ENCODE measurements at regions of chr17 and their contacts with region 1.

Region 1: GRCh38 chr17:11880714-11881113 is 116.6 kb downstream of the ZNF18 start:
- DNase-seq: peak; percentile 5
- H3K4me3 Mint-ChIP-seq: no peak overlapping the region
- H3K27ac Mint-ChIP-seq: no peak overlapping the region
- H3K4me1 Mint-ChIP-seq: no peaks in the 10 kb centered on the region
- H3K27me3 Mint-ChIP-seq: no peaks in the 10 kb centered on the region
- CTCF ChIP-seq: peak; percentile 59

Region 2: GRCh38 chr17:11144358-11145233 is 736.1 kb before region 1 on chr17:
- CTCF ChIA-PET with region 1: interaction called, 10 read pairs
- POLR2A ChIA-PET with region 1: no interaction called
- intact Hi-C with region 1: no loop called
- DNase-seq: peak; percentile 46
- H3K4me3 Mint-ChIP-seq: no peak overlapping the region
- H3K27ac Mint-ChIP-seq: no peak overlapping the region
- H3K4me1 Mint-ChIP-seq: peaks cover 14% of the 10 kb centered on the region
- H3K27me3 Mint-ChIP-seq: no peaks in the 10 kb centered on the region
- CTCF ChIP-seq: peak; percentile 74

Region 3: DNA sequence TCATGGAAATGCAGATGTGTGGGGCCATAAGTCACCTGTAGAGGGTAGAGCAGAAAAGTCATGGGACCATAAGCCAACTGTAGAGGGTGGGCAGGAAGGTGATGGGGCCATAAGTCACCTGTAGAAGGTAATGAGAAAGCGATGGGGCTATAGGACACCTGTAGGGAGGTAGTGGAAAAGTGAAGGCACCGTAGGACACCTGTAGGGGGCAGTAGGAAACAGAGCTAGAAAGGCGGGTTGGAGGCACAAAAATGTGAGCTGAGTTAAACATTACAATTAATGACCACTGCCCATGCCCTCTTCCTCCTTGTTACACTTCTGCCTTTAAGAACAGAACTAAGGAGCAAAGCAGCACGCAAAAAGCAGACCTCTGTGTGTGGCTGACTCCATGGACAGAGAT is 489.6 kb before region 1 on chr17:
- CTCF ChIA-PET with region 1: no interaction called
- POLR2A ChIA-PET with region 1: no interaction called
- intact Hi-C with region 1: loop called (anchors 1 kb)
- DNase-seq: no peak
- H3K4me3 Mint-ChIP-seq: no peak overlapping the region
- H3K27ac Mint-ChIP-seq: no peak overlapping the region
- H3K4me1 Mint-ChIP-seq: peaks cover 11% of the 10 kb centered on the region
- H3K27me3 Mint-ChIP-seq: no peaks in the 10 kb centered on the region
- CTCF ChIP-seq: peak; percentile 33

Region 4: DNA sequence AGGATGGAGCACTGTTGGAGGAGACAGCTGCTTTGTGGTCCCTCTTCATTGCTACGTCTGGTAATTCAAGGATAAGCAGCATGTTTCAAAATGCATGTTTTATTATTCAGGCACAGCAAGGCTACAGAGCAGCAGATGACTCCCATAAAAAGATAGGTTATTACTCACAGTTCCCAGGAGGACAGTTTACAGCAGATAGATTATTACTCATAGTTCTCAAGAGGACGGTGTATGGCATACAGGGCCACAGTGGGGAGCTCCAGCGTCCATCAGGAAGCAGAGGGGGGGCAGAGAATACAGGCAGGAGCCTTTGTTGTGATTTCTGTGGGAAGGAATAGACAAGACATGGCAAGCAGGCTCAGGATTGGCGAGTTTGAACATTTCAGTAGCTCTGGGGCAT is 209.6 kb before region 1 on chr17:
- CTCF ChIA-PET with region 1: interaction called, 3 read pairs
- POLR2A ChIA-PET with region 1: no interaction called
- intact Hi-C with region 1: loop called (anchors 1 kb)
- DNase-seq: no peak
- H3K4me3 Mint-ChIP-seq: no peak overlapping the region
- H3K27ac Mint-ChIP-seq: no peak overlapping the region
- H3K4me1 Mint-ChIP-seq: peaks cover 6% of the 10 kb centered on the region
- H3K27me3 Mint-ChIP-seq: no peaks in the 10 kb centered on the region
- CTCF ChIP-seq: no peak

Region 5: DNA sequence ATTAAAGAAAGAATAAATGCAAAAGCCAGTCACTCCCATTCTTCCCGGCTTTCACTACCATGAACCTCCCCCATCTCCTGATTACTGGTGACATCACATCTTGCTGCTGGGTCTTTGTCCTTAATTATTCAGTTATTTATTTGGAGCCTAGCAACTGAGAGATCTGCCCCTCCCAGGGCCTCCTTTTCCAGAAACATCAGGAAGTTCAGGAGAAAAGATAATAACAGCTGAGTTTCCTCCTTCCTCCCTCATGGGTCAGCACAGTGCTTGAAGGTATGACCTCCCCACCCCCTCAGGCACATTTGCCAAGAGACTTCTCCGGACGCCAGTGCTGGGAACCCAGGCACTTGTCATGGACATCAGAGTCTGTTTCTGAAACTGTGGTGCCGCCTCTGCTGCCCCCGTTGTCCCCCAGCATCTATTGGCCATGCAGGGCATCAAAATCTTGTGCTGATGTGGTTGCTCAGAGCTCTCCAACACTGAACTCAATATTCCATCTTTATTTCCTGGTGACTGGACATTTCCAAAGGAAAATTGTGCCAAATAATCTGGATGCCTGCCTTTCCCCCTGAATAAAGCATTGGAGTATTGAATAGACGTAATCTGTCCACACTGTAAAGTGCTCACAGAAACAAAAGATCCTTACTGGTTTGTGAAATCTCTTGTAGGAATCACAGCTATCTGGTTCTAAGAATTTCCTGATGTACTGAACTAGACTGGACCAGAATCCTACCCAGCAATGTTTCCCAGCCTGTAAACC is 44.7 kb after region 1 on chr17:
- CTCF ChIA-PET with region 1: no interaction called
- POLR2A ChIA-PET with region 1: no interaction called
- intact Hi-C with region 1: no loop called
- DNase-seq: no peak
- H3K4me3 Mint-ChIP-seq: no peak overlapping the region
- H3K27ac Mint-ChIP-seq: no peak overlapping the region
- H3K4me1 Mint-ChIP-seq: peaks cover 6% of the 10 kb centered on the region
- H3K27me3 Mint-ChIP-seq: no peaks in the 10 kb centered on the region
- CTCF ChIP-seq: no peak